Common myeloid progenitor, CD34-positive (primary cell): ENCODE measurements at regions of chr13 and their contacts with region 1.

Region 1: DNA sequence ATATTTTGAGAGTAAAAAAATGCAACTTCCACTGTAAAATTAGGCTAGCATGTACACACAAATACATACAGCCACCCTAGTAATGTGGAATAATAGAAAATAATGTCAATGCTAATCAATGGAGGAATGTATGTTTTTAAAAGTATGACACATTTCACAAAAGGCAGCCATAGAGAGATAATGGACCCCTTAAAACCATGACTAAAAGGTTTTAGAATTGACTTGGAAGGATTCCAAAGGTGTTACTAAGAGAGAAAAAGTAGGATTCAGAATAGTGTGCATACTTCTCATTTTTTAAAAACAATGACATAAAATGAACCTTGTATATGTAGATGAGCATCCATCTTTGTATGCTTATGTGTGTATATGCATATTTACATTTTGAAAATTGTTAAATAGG is 597.9 kb upstream of the PCDH9 start:
- DNase-seq: peak in 2 of 3 donors; percentile 32 to 45
- H3K4me3 ChIP-seq: no peak overlapping the region
- H3K27ac ChIP-seq: no peak overlapping the region
- H3K4me1 ChIP-seq: peaks cover 0 to 10% (median 2%) of the 10 kb centered on the region in 4 experiments
- H3K27me3 ChIP-seq: no peaks in the 10 kb centered on the region

Region 2: GRCh38 chr13:67763384-67763783 is 64.6 kb before region 1 on chr13:
- CTCF ChIA-PET with region 1: no interaction called
- POLR2A ChIA-PET with region 1: no interaction called
- DNase-seq: no peak
- H3K4me3 ChIP-seq: no peak overlapping the region
- H3K27ac ChIP-seq: no peak overlapping the region
- H3K4me1 ChIP-seq: no peaks in the 10 kb centered on the region
- H3K27me3 ChIP-seq: no peaks in the 10 kb centered on the region

Region 3: DNA sequence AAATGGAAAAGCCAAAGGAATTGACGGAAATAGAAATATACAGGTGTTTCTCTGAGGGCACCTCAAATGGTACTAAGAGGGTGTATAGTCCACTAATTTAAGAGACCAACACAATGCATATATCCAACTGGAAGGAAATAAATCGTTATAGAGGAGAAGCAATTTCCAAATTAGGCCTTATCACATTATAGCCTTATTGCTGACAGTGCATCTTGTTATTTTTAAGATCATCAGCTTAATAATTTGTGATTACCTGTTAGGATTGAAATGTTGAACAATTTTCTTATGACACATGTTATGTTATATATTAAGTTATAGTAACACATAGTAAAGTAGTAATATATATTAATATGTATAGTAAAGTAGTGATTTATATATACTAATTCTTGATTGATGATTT is 317.9 kb after region 1 on chr13:
- CTCF ChIA-PET with region 1: no interaction called
- POLR2A ChIA-PET with region 1: interaction called, 10 read pairs
- DNase-seq: no peak
- H3K4me3 ChIP-seq: no peak overlapping the region
- H3K27ac ChIP-seq: no peak overlapping the region
- H3K4me1 ChIP-seq: no peaks in the 10 kb centered on the region
- H3K27me3 ChIP-seq: no peaks in the 10 kb centered on the region